ENCODE measurements at regions of chr7 and their contacts with region 1.

Region 1: GRCh38 chr7:92245487-92246362 is at the starts of genes ANKIB1 and KRIT1:
- DNase-seq: peak; percentile 81
- H3K4me3 Mint-ChIP-seq: peak within 1 kb of the TSS; percentile 94
- H3K27ac Mint-ChIP-seq: peak within 1 kb of the TSS; percentile 99
- H3K4me1 Mint-ChIP-seq: peaks cover 34% of the 10 kb centered on the region
- H3K27me3 Mint-ChIP-seq: no peaks in the 10 kb centered on the region
- total RNA-seq, gene ANKIB1: 60.9 and 61.8 TPM in 2 replicates
- total RNA-seq, gene KRIT1: 48.2 and 48.3 TPM in 2 replicates

Region 2: GRCh38 chr7:91880413-91881241 is 365.1 kb before region 1 on chr7 and contains the start of gene MTERF1:
- intact Hi-C with region 1: loop called (anchors 5 kb)
- DNase-seq: peak; percentile 85
- H3K4me3 Mint-ChIP-seq: peak within 1 kb of the TSS; percentile 99
- H3K27ac Mint-ChIP-seq: peak within 1 kb of the TSS; percentile 98
- H3K4me1 Mint-ChIP-seq: peaks cover 37% of the 10 kb centered on the region
- H3K27me3 Mint-ChIP-seq: peaks cover 2% of the 10 kb centered on the region
- total RNA-seq, gene MTERF1: 19.3 and 20.4 TPM in 2 replicates

Region 3: DNA sequence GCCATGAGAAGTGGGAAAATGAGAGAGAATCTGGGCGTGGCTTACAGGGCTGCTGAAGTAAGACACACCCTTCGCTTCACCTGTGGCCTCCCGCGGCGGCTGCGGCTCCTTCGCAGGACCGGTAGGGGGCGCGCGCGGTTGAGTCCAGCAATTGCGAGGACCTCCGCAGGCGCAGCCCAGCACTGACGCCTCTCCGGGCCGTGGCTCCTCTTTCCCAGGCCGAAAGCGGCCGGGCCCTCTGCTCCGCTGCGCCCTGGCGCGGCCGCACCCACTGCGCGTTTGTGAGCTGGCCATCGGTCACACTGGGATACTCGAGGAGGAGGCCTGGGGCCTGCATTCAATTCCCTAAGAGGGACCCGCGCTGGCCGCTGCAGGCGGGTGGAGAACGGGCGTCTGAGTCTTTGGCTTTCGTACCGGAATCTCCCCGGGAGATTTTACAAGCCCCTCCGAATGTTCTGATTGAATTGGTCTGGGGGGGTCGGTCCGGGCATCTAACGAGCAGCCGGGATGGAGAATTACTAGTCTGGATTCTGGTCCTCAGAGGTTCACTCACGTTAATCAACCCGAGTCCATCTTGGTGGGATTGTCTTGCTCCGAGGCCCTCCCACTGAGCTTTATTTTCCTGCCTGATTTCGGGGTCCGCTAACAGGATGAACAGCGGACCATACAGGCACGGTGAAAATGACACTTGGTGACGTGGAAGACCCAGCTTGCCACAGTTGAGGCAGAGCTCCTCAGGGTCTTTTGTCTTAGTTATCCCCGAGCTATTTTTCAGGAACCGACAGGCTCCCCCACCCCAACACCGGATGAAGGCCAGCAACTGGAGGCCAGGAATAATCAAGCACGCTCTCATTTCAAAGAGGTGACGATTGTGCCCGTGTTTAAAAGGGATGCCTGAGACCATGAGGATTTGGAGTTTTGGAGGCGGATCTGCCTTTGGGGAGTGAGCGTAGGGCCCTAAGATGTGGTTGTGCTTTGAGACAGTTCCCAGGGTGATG is 66.5 kb before region 1 on chr7 and contains the start of gene LRRD1:
- intact Hi-C with region 1: loop called (anchors 2 kb)
- DNase-seq: peak; percentile 84
- H3K4me3 Mint-ChIP-seq: peak within 1 kb of the TSS; percentile 69
- H3K27ac Mint-ChIP-seq: no peak within 1 kb of the TSS
- H3K4me1 Mint-ChIP-seq: no peaks in the 10 kb centered on the region
- H3K27me3 Mint-ChIP-seq: peaks cover 15% of the 10 kb centered on the region
- total RNA-seq, gene LRRD1: not detected in 2 replicates

Region 4: GRCh38 chr7:92366730-92367129 is 121.0 kb after region 1 on chr7:
- intact Hi-C with region 1: no loop called
- DNase-seq: no peak
- H3K4me3 Mint-ChIP-seq: no peak overlapping the region
- H3K27ac Mint-ChIP-seq: no peak overlapping the region
- H3K4me1 Mint-ChIP-seq: no peaks in the 10 kb centered on the region
- H3K27me3 Mint-ChIP-seq: no peaks in the 10 kb centered on the region

Region 5: GRCh38 chr7:92404170-92404614 is 158.5 kb after region 1 on chr7:
- intact Hi-C with region 1: loop called (anchors 5 kb)
- DNase-seq: no peak
- H3K4me3 Mint-ChIP-seq: no peak overlapping the region
- H3K27ac Mint-ChIP-seq: no peak overlapping the region
- H3K4me1 Mint-ChIP-seq: peaks cover 19% of the 10 kb centered on the region
- H3K27me3 Mint-ChIP-seq: no peaks in the 10 kb centered on the region

Region 6: GRCh38 chr7:92584996-92585395 is 339.3 kb after region 1 on chr7:
- intact Hi-C with region 1: loop called (anchors 5 kb)
- DNase-seq: no peak
- H3K4me3 Mint-ChIP-seq: no peak overlapping the region
- H3K27ac Mint-ChIP-seq: no peak overlapping the region
- H3K4me1 Mint-ChIP-seq: peaks cover 70% of the 10 kb centered on the region
- H3K27me3 Mint-ChIP-seq: no peaks in the 10 kb centered on the region

Region 7: GRCh38 chr7:93231799-93232672 is 986.3 kb after region 1 on chr7 and contains the start of gene VPS50:
- intact Hi-C with region 1: loop called (anchors 2 kb)
- DNase-seq: peak; percentile 91
- H3K4me3 Mint-ChIP-seq: peak within 1 kb of the TSS; percentile 98
- H3K27ac Mint-ChIP-seq: peak within 1 kb of the TSS; percentile 93
- H3K4me1 Mint-ChIP-seq: peaks cover 18% of the 10 kb centered on the region
- H3K27me3 Mint-ChIP-seq: peaks cover 7% of the 10 kb centered on the region
- total RNA-seq, gene VPS50: 16.7 and 17.0 TPM in 2 replicates

Measured in activated T-helper 1 cell treated with anti-CD3 and anti-CD28 coated beads, Interleukin-12 subunit alpha, Interleukin-12 subunit beta, Interleukin-2, Interleukin-4 antibody, amounts not matched to agents 30 ng/mL and 10 ng/mL and 1 ng/mL, durations not matched to agents 14 hours and 24 hours and 36 hours (primary cell).